IMR-90 (cell line): ENCODE measurements at regions of chr5 and their contacts with region 1.

Region 1: DNA sequence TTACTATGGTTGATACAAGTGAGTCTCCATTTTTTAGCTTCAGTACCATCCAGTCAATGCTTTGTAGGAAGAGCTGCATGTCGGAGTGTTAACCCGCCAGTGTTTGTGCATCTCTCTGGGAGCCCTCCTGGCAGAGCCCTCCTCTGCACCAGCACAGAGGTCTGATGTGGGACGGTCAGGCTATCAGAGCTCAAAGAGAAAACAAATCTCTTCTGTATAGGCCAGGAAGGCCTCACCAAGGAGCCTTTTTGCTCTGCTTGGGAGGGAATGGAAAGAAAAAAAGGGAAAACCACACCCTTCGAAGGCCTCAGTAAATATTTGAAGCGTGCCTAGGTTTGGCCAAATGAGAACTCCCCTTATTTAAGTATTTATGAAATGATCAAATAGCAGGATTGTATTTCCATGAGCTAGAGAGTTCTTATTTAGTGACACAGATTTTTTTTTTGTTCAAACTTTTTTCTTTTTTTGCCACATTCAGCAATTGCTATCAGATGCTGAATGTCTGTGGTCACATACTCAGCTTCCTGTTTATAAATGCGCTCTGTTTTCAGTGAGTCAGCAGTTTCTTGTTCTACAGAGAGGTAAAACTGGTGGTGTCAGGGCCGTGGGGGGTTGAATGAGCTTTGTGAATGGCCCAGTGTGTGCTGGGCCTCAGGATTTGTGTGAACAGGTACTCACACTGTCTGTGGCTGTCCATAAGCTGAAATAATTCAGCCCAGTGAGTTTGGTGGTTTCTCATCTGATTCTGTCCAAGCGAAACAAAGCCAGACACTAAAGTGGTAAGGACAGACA is 226.6 kb downstream of the SNX18 start:
- DNase-seq: peak; percentile 99
- ATAC-seq: peak; percentile 82
- H3K4me3 ChIP-seq: no peak overlapping the region
- H3K27ac ChIP-seq: peak overlapping the region; percentile 100
- H3K4me1 ChIP-seq: peaks cover 29% of the 10 kb centered on the region
- H3K27me3 ChIP-seq: no peaks in the 10 kb centered on the region
- CTCF ChIP-seq: no peak
- POLR2A ChIP-seq: no peak
- RAD21 ChIP-seq: no peak

Region 2: GRCh38 chr5:53971131-53971530 is 773.1 kb before region 1 on chr5:
- CTCF ChIA-PET with region 1: no interaction called
- POLR2A ChIA-PET with region 1: no interaction called
- dilution Hi-C with region 1: no loop called
- in situ Hi-C with region 1: no loop called
- intact Hi-C with region 1: no loop called
- DNase-seq: no peak
- ATAC-seq: no peak; the same call in 1 of the 2 replicates
- H3K4me3 ChIP-seq: no peak overlapping the region
- H3K27ac ChIP-seq: no peak overlapping the region
- H3K4me1 ChIP-seq: no peaks in the 10 kb centered on the region
- H3K27me3 ChIP-seq: no peaks in the 10 kb centered on the region
- CTCF ChIP-seq: no peak
- POLR2A ChIP-seq: no peak
- RAD21 ChIP-seq: no peak

Region 3: GRCh38 chr5:54663866-54664265 is 80.3 kb before region 1 on chr5:
- CTCF ChIA-PET with region 1: no interaction called
- POLR2A ChIA-PET with region 1: no interaction called
- dilution Hi-C with region 1: no loop called
- in situ Hi-C with region 1: no loop called
- intact Hi-C with region 1: loop called (anchors 1 kb)
- DNase-seq: peak; percentile 96
- ATAC-seq: peak; percentile 87
- H3K4me3 ChIP-seq: no peak overlapping the region
- H3K27ac ChIP-seq: peak overlapping the region; percentile 93; the same call in 1 of the 2 replicates
- H3K4me1 ChIP-seq: peaks cover 23% of the 10 kb centered on the region
- H3K27me3 ChIP-seq: no peaks in the 10 kb centered on the region
- CTCF ChIP-seq: no peak
- POLR2A ChIP-seq: no peak
- RAD21 ChIP-seq: no peak

Region 4: DNA sequence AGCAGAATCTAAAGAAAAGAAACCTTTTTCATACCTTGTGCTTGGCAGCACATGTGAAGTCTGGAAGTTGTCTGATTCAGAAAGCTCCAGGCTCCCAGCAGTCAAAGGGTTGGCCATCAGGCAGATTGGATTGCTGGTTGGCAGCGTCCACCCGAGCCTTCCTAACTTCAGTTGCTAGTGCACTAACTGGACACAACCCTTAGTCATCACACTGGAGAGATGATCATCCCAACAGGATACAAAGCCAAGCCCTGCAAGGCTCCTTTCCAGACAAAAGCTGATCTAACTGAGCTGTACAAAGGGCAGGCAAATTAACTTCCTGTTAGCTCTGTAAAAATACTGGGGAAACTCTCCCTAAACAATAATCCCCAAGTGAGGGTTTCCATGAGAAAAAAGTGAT is 41.1 kb before region 1 on chr5:
- CTCF ChIA-PET with region 1: no interaction called
- POLR2A ChIA-PET with region 1: interaction called, 4 read pairs
- dilution Hi-C with region 1: no loop called
- in situ Hi-C with region 1: no loop called
- intact Hi-C with region 1: loop called (anchors 2 kb)
- DNase-seq: peak; percentile 93
- ATAC-seq: peak; percentile 66
- H3K4me3 ChIP-seq: peak overlapping the region; percentile 11; the same call in 1 of the 2 replicates
- H3K27ac ChIP-seq: peak overlapping the region; percentile 87; the same call in 1 of the 2 replicates
- H3K4me1 ChIP-seq: peaks cover 27% of the 10 kb centered on the region
- H3K27me3 ChIP-seq: no peaks in the 10 kb centered on the region
- CTCF ChIP-seq: no peak
- POLR2A ChIP-seq: no peak
- RAD21 ChIP-seq: peak; percentile 30

Region 5: DNA sequence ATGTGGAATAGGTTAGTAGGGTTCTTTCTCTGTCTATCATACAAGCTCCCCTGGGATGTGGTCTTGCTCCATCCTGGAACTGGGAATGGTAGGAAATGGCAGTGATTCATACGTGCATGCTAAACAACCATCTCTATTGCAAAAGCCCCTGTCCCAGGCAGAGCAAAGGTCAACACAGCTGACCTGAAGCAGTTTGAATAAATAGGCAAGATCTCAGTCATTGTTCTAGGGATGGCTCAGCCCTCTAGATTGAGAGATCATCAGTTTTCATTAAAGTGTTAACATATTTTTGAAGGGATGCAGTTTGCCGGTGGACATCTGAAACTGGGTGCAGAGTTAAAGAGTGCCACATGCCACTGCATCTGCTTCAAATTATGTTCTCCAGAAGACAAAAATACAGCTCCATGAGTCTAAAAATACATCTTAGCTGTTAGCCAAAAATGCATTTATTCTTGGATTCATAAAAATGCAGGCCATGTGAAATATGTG is 17.1 kb after region 1 on chr5:
- CTCF ChIA-PET with region 1: interaction called, 4 read pairs
- POLR2A ChIA-PET with region 1: interaction called, 5 read pairs
- dilution Hi-C with region 1: no loop called
- in situ Hi-C with region 1: no loop called
- intact Hi-C with region 1: loop called (anchors 1 kb)
- DNase-seq: peak; percentile 95
- ATAC-seq: peak; percentile 78
- H3K4me3 ChIP-seq: no peak overlapping the region
- H3K27ac ChIP-seq: peak overlapping the region; percentile 68; the same call in 1 of the 2 replicates
- H3K4me1 ChIP-seq: peaks cover 27% of the 10 kb centered on the region
- H3K27me3 ChIP-seq: no peaks in the 10 kb centered on the region
- CTCF ChIP-seq: no peak
- POLR2A ChIP-seq: no peak
- RAD21 ChIP-seq: no peak; the same call in 1 of the 2 replicates

Region 6: DNA sequence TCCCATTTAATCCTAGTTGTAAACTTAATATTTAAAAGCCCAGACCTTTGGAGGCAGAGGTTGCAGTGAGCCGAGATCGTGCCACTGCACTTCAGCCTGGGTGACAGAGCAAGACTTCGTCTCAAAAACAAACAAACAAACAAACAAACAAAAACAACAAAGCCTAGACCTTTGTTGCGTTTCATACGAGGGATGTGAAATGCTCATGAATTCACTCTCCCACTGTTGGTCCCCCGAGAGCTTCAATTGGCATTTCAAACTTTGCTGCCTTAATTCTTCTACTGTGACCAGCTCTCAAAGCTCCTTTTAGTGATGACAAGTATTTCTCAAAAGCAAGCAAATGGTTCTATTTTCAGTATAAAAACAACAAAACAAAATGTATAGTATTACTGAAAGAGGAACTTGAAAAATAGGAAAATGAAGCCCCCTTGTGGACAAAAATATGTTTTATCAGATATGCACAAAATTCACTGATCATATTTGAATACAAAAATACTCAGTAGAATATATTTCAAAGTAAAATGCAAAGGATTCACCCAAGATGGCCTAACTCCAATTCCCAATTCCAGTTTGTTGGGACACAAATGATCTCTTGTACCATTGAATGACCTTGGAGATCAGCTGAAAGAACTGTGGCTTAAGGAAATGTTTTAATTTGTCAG is 100.8 kb after region 1 on chr5:
- CTCF ChIA-PET with region 1: interaction called, 13 read pairs
- POLR2A ChIA-PET with region 1: interaction called, 8 read pairs
- dilution Hi-C with region 1: no loop called
- in situ Hi-C with region 1: no loop called
- intact Hi-C with region 1: loop called (anchors 1 kb)
- DNase-seq: peak; percentile 79
- ATAC-seq: peak; percentile 71
- H3K4me3 ChIP-seq: no peak overlapping the region
- H3K27ac ChIP-seq: peak overlapping the region; percentile 89
- H3K4me1 ChIP-seq: peaks cover 21% of the 10 kb centered on the region
- H3K27me3 ChIP-seq: no peaks in the 10 kb centered on the region
- CTCF ChIP-seq: peak; percentile 68
- POLR2A ChIP-seq: peak; percentile 25; the same call in 1 of the 2 replicates
- RAD21 ChIP-seq: peak; percentile 73

Region 7: GRCh38 chr5:55159763-55160492 is 415.7 kb after region 1 on chr5 and contains the start of gene GPX8:
- CTCF ChIA-PET with region 1: no interaction called
- POLR2A ChIA-PET with region 1: no interaction called
- dilution Hi-C with region 1: no loop called
- in situ Hi-C with region 1: loop called (anchors 25 kb)
- intact Hi-C with region 1: loop called (anchors 5 kb)
- DNase-seq: peak; percentile 92
- ATAC-seq: peak; percentile 88
- H3K4me3 ChIP-seq: peak within 1 kb of the TSS; percentile 66
- H3K27ac ChIP-seq: peak within 1 kb of the TSS; percentile 76
- H3K4me1 ChIP-seq: peaks cover 4% of the 10 kb centered on the region
- H3K27me3 ChIP-seq: no peaks in the 10 kb centered on the region
- CTCF ChIP-seq: peak; percentile 75
- POLR2A ChIP-seq: peak; percentile 77
- RAD21 ChIP-seq: peak; percentile 86
- total RNA-seq, gene GPX8: 166 and 201 TPM in 2 replicates

Region 8: DNA sequence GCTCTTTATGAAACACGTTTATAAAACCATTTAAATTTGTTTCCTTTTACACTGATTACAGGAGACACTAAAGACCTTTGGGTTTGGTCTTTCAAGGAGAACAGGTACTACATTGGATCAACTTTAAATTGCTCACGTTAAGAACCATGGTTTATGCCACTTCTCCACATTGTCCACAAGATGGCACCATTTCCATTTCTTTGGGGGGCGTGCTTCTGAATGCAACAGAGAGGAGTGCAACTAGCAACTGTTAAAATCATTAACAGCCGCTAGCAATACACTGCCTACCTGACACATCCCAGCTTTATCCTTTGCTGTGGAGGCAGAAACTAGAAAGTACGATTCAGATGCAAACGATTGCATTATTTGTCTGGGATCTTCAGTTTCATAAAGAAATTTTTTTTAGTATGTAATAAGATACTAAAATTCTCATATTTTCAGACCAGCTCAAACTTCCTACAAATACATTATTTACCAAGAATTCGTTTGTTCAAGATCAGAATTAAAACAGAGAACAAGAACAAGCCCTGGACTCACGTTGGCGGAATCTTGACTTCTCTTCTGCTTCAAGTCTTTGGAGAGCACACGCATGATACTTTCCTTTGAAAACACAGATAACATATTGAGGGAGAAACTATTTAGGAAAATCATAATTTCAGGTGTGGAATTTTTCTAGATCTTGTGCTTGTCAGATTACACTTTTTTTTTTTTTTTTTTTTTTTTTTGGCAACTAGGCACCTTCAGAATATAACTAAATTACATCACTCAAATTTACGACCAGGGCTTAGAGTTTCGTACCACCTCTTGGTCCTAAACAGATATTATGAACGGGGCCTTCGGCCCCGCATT is 428.1 kb after region 1 on chr5:
- CTCF ChIA-PET with region 1: no interaction called
- POLR2A ChIA-PET with region 1: no interaction called
- dilution Hi-C with region 1: no loop called
- in situ Hi-C with region 1: loop called (anchors 25 kb)
- intact Hi-C with region 1: no loop called
- DNase-seq: peak; percentile 78
- ATAC-seq: peak; percentile 45
- H3K4me3 ChIP-seq: peak overlapping the region; percentile 55
- H3K27ac ChIP-seq: no peak overlapping the region
- H3K4me1 ChIP-seq: peaks cover 7% of the 10 kb centered on the region
- H3K27me3 ChIP-seq: peaks cover 28% of the 10 kb centered on the region
- CTCF ChIP-seq: peak; percentile 88
- POLR2A ChIP-seq: no peak
- RAD21 ChIP-seq: peak; percentile 87

Region 9: GRCh38 chr5:55608595-55609349 is 864.6 kb after region 1 on chr5:
- CTCF ChIA-PET with region 1: no interaction called
- POLR2A ChIA-PET with region 1: no interaction called
- dilution Hi-C with region 1: no loop called
- in situ Hi-C with region 1: no loop called
- intact Hi-C with region 1: no loop called
- DNase-seq: no peak
- ATAC-seq: no peak
- H3K4me3 ChIP-seq: no peak overlapping the region
- H3K27ac ChIP-seq: no peak overlapping the region
- H3K4me1 ChIP-seq: peaks cover 4% of the 10 kb centered on the region
- H3K27me3 ChIP-seq: no peaks in the 10 kb centered on the region
- CTCF ChIP-seq: no peak
- POLR2A ChIP-seq: no peak
- RAD21 ChIP-seq: no peak